ENCODE measurements at regions of chr4 and their contacts with region 1.

Region 1: GRCh38 chr4:177441803-177442622 is at the start of gene AGA:
- DNase-seq: peak; percentile 95 to 97 (median 96)
- H3K4me3 ChIP-seq: peak within 1 kb of the TSS; percentile 59 to 81
- H3K4me3 Mint-ChIP-seq: peak within 1 kb of the TSS; percentile 86 to 97 (median 91)
- H3K27ac ChIP-seq: peak within 1 kb of the TSS; percentile 81
- H3K27ac Mint-ChIP-seq: peak within 1 kb of the TSS; percentile 86 to 99 (median 94)
- H3K4me1 ChIP-seq: peaks cover 26% of the 10 kb centered on the region
- H3K4me1 Mint-ChIP-seq: peaks cover 22 to 34% (median 30%) of the 10 kb centered on the region in 4 donors
- H3K27me3 ChIP-seq: no peaks in the 10 kb centered on the region
- H3K27me3 Mint-ChIP-seq: no peaks in the 10 kb centered on the region
- total RNA-seq, gene AGA: 23.2 to 27.3 TPM

Region 2: GRCh38 chr4:176195184-176195978 is 1246.6 kb before region 1 on chr4 and contains the start of gene SPATA4:
- CTCF ChIA-PET with region 1: no interaction called
- POLR2A ChIA-PET with region 1: interaction called, 6 read pairs
- intact Hi-C with region 1: loop called (anchors 10 kb)
- DNase-seq: peak; percentile 89 to 94 (median 91)
- H3K4me3 ChIP-seq: peak within 1 kb of the TSS; percentile 66 to 68
- H3K4me3 Mint-ChIP-seq: peak within 1 kb of the TSS; percentile 86 to 96 (median 90)
- H3K27ac ChIP-seq: no peak within 1 kb of the TSS
- H3K27ac Mint-ChIP-seq: peak within 1 kb of the TSS; percentile 82 to 95 (median 90)
- H3K4me1 ChIP-seq: peaks cover 13% of the 10 kb centered on the region
- H3K4me1 Mint-ChIP-seq: peaks cover 5 to 12% (median 10%) of the 10 kb centered on the region in 4 donors
- H3K27me3 ChIP-seq: peaks cover 10% of the 10 kb centered on the region
- H3K27me3 Mint-ChIP-seq: peaks cover 19 to 29% of the 10 kb centered on the region in 2 donors
- total RNA-seq, gene SPATA4: not detected

Region 3: DNA sequence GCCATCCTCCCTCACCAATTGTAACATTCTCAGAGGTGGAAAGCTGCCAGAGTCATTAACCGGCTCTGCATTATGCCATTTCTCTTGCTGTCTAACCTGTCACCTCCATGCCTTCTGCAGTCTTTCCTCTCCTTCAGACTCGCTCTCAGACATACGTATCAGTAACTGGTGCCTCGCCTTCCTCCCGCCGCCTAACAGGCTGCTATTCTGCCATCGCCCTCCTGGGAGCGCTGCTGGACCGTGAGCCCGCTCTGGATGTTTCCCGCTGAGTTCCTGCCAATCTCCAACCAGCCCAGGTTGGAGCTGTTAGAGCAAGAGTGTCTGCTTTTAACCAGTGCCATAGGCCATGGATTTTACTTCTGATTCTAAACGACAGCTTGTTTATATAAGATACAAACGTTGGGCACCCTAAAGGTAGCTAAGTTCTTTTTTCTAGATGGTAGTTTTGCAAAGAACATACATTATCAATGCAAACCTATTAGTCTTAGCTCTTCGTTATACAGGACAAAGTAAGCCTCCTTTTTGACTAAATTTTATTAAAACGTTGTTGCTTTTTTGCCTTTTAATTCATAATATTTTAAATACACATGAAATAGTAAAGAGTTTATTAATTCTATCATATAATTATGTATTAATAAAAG is 191.8 kb before region 1 on chr4:
- CTCF ChIA-PET with region 1: interaction called, 16 read pairs
- POLR2A ChIA-PET with region 1: interaction called, 3 read pairs
- intact Hi-C with region 1: loop called (anchors 5 kb)
- DNase-seq: peak; percentile 49 to 68 (median 62)
- H3K4me3 ChIP-seq: no peak overlapping the region
- H3K4me3 Mint-ChIP-seq: peak overlapping the region in 3 of 8 donors; percentile 7 to 77 (median 48)
- H3K27ac ChIP-seq: no peak overlapping the region
- H3K27ac Mint-ChIP-seq: no peak overlapping the region
- H3K4me1 ChIP-seq: peaks cover 10% of the 10 kb centered on the region
- H3K4me1 Mint-ChIP-seq: peaks cover 9 to 13% (median 11%) of the 10 kb centered on the region in 4 donors
- H3K27me3 ChIP-seq: no peaks in the 10 kb centered on the region
- H3K27me3 Mint-ChIP-seq: peaks cover 4 to 7% of the 10 kb centered on the region in 2 donors

Region 4: GRCh38 chr4:177315767-177316464 is 126.1 kb before region 1 on chr4:
- CTCF ChIA-PET with region 1: no interaction called
- POLR2A ChIA-PET with region 1: interaction called, 12 read pairs
- intact Hi-C with region 1: no loop called
- DNase-seq: peak in 2 of 5 donors; percentile 8 to 25
- H3K4me3 ChIP-seq: peak overlapping the region; percentile 45 to 62
- H3K4me3 Mint-ChIP-seq: peak overlapping the region; percentile 65 to 89 (median 82)
- H3K27ac ChIP-seq: peak overlapping the region; percentile 44
- H3K27ac Mint-ChIP-seq: peak overlapping the region; percentile 1 to 88 (median 68)
- H3K4me1 ChIP-seq: peaks cover 64% of the 10 kb centered on the region
- H3K4me1 Mint-ChIP-seq: peaks cover 44 to 76% (median 51%) of the 10 kb centered on the region in 4 donors
- H3K27me3 ChIP-seq: no peaks in the 10 kb centered on the region
- H3K27me3 Mint-ChIP-seq: no peaks in the 10 kb centered on the region

Region 5: DNA sequence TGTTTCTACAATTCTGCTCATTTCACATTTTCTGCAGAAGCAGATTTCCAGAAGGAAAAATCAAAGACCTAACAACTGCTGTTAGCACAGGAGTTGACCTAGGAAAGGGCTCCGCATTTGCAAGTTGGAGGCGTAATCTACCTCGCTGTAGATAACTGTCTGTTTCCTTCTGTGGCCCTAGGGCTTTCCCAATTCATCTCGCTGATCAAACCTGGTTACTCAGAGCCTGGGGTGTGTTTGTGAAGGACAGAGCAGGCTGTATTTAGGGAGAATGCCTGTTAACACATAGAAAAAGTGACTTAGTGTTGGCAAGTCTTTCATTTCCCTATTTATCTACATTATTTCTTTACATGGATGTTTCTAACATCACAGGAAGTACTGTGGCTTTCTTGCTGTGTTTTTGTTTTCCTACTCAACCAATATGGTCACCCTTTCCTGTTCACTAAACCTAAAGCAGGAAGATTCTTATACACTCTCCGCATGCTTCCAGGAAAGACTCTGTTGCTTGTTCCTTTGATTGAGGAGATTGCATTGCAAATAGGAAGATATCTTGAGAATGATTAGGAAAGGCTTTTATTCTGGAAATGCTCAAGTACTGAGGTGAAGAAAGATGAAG is 40.2 kb before region 1 on chr4:
- CTCF ChIA-PET with region 1: no interaction called
- POLR2A ChIA-PET with region 1: interaction called, 10 read pairs
- intact Hi-C with region 1: loop called (anchors 5 kb)
- DNase-seq: peak in 3 of 5 donors; percentile 15 to 31 (median 24)
- H3K4me3 ChIP-seq: no peak overlapping the region
- H3K4me3 Mint-ChIP-seq: peak overlapping the region in 7 of 8 donors; percentile 47 to 79 (median 69)
- H3K27ac ChIP-seq: no peak overlapping the region
- H3K27ac Mint-ChIP-seq: peak overlapping the region; percentile 70 to 91 (median 85)
- H3K4me1 ChIP-seq: peaks cover 30% of the 10 kb centered on the region
- H3K4me1 Mint-ChIP-seq: peaks cover 32 to 44% (median 37%) of the 10 kb centered on the region in 4 donors
- H3K27me3 ChIP-seq: no peaks in the 10 kb centered on the region
- H3K27me3 Mint-ChIP-seq: no peaks in the 10 kb centered on the region

Measured in CD4-positive, alpha-beta memory T cell (primary cell).